ENCODE measurements at regions of chr1 and their contacts with region 1.

Region 1: GRCh38 chr1:57072401-57073110 is 106.7 kb upstream of the C8B start:
- DNase-seq: no peak
- H3K4me3 ChIP-seq: no peak overlapping the region
- H3K27ac ChIP-seq: no peak overlapping the region
- H3K4me1 ChIP-seq: no peaks in the 10 kb centered on the region
- H3K27me3 ChIP-seq: no peaks in the 10 kb centered on the region
- CTCF ChIP-seq: no peak
- POLR2A ChIP-seq: no peak

Region 2: DNA sequence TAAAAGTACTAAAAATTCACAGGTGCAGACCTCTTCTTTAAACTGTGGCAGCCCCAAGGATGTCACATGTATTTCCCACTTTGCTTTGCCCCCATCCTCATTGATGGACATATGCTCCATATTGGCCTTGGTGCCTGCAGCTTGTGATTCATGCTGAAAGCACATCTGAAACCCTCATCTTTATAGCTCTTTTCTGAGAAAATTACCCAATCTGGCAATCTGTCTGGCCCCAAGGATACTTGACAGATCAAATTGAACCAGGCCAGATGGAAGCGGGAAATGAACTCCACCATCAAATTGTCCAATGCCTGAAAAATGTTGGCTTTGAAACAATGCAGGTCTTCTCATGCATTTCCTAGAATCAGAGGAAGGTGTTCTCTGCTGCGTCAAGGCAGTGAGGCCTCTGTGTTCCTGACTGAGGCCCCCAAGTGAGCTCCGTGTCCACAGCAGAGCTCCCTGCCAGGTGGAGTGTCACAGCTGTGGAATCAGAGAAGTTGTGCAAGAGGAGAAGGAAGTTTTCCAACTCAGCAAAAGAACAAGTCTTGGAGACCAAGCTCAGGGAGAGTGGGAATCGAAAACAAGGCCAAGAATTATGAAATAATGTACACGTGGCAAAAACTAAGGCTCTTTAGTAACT is 816.9 kb before region 1 on chr1:
- intact Hi-C with region 1: loop called (anchors 10 kb)
- DNase-seq: peak in 1 of 2 donors; percentile 52
- H3K4me3 ChIP-seq: no peak overlapping the region
- H3K27ac ChIP-seq: peak overlapping the region; percentile 59 to 75
- H3K4me1 ChIP-seq: peaks cover 0 to 4% of the 10 kb centered on the region in 2 donors
- H3K27me3 ChIP-seq: no peaks in the 10 kb centered on the region
- CTCF ChIP-seq: no peak
- POLR2A ChIP-seq: no peak

Region 3: DNA sequence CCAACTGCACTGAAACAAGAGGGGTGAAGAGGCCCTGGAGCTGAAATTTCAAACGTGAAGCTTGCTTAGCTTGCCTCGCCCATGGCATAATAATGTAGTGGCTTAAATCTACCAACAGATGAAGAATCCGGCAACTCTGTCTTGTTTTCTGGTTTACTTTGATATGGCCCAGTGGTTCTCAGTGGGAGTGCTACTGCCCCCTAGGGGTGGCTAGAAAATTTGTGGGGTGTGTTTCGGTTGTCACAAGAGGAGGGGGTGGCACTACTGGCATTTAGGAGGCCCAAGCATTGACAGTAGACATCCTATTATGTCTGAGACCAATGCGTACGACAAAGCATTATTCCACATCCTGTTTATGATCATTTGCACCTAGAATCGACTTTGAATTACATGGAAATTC is 54.8 kb before region 1 on chr1:
- intact Hi-C with region 1: no loop called
- DNase-seq: no peak
- H3K4me3 ChIP-seq: no peak overlapping the region
- H3K27ac ChIP-seq: no peak overlapping the region
- H3K4me1 ChIP-seq: no peaks in the 10 kb centered on the region
- H3K27me3 ChIP-seq: no peaks in the 10 kb centered on the region
- CTCF ChIP-seq: no peak
- POLR2A ChIP-seq: no peak

Region 4: GRCh38 chr1:57102561-57103326 is 30.2 kb after region 1 on chr1:
- intact Hi-C with region 1: loop called (anchors 2 kb)
- DNase-seq: no peak
- H3K4me3 ChIP-seq: no peak overlapping the region
- H3K27ac ChIP-seq: no peak overlapping the region
- H3K4me1 ChIP-seq: no peaks in the 10 kb centered on the region
- H3K27me3 ChIP-seq: no peaks in the 10 kb centered on the region
- CTCF ChIP-seq: no peak
- POLR2A ChIP-seq: no peak

Region 5: GRCh38 chr1:57279909-57280666 is 207.5 kb after region 1 on chr1:
- intact Hi-C with region 1: no loop called
- DNase-seq: no peak
- H3K4me3 ChIP-seq: no peak overlapping the region
- H3K27ac ChIP-seq: no peak overlapping the region
- H3K4me1 ChIP-seq: no peaks in the 10 kb centered on the region
- H3K27me3 ChIP-seq: no peaks in the 10 kb centered on the region
- CTCF ChIP-seq: no peak
- POLR2A ChIP-seq: no peak

Region 6: GRCh38 chr1:57357462-57357861 is 284.9 kb after region 1 on chr1:
- intact Hi-C with region 1: no loop called
- DNase-seq: no peak
- H3K4me3 ChIP-seq: no peak overlapping the region
- H3K27ac ChIP-seq: no peak overlapping the region
- H3K4me1 ChIP-seq: no peaks in the 10 kb centered on the region
- H3K27me3 ChIP-seq: no peaks in the 10 kb centered on the region
- CTCF ChIP-seq: no peak
- POLR2A ChIP-seq: no peak